ENCODE measurements at regions of chr14 and their contacts with region 1.

Region 1: DNA sequence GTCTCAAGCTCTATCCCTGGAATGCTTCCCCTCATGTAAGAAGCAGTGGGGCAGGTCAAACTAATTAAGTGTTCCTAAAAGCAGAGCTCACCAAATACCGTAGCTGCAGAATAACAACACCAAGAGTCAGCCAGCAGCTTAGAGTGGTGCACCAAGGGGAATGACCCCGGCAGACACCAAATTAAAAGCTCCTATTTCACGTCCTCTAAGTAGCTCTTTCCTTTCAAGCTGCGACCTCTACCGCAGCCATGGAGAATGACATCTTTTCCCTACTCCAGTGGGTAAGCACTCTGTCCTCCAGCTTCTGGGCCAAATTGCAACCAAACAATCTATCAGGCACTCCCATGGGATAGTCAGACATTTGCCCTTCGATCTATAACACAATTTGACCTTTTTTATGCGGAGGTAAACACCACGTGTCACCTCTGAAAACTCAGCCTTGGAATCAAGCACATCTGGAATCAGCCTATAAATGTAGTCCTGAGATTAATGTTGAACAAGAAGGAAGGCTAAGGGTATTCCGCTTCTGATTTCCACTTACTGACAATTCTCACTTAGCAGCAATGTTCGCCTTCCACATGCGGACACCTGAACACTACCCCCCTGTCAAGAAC is 67.6 kb upstream of the CDKN3 start:
- DNase-seq: peak; percentile 65
- ATAC-seq: peak; percentile 94
- H3K4me3 ChIP-seq: no peak overlapping the region
- H3K27ac ChIP-seq: no peak overlapping the region
- H3K4me1 ChIP-seq: peaks cover 19% of the 10 kb centered on the region
- H3K27me3 ChIP-seq: no peaks in the 10 kb centered on the region
- CTCF ChIP-seq: peak; percentile 93
- EP300 ChIP-seq: no peak
- POLR2A ChIP-seq: no peak
- RAD21 ChIP-seq: peak; percentile 86

Region 2: GRCh38 chr14:53663709-53664108 is 665.5 kb before region 1 on chr14:
- CTCF ChIA-PET with region 1: no interaction called
- POLR2A ChIA-PET with region 1: no interaction called
- in situ Hi-C with region 1: no loop called
- intact Hi-C with region 1: loop called (anchors 2 kb)
- DNase-seq: peak; percentile 76
- ATAC-seq: peak; percentile 99
- H3K4me3 ChIP-seq: no peak overlapping the region
- H3K27ac ChIP-seq: no peak overlapping the region
- H3K4me1 ChIP-seq: peaks cover 17% of the 10 kb centered on the region
- H3K27me3 ChIP-seq: no peaks in the 10 kb centered on the region
- CTCF ChIP-seq: peak; percentile 69
- EP300 ChIP-seq: no peak
- POLR2A ChIP-seq: no peak
- RAD21 ChIP-seq: peak; percentile 80

Region 3: GRCh38 chr14:53902307-53902706 is 426.9 kb before region 1 on chr14:
- CTCF ChIA-PET with region 1: no interaction called
- POLR2A ChIA-PET with region 1: no interaction called
- in situ Hi-C with region 1: no loop called
- intact Hi-C with region 1: no loop called
- DNase-seq: no peak
- ATAC-seq: no peak
- H3K4me3 ChIP-seq: no peak overlapping the region
- H3K27ac ChIP-seq: no peak overlapping the region
- H3K4me1 ChIP-seq: peaks cover 22% of the 10 kb centered on the region
- H3K27me3 ChIP-seq: no peaks in the 10 kb centered on the region
- CTCF ChIP-seq: no peak
- EP300 ChIP-seq: no peak
- POLR2A ChIP-seq: no peak
- RAD21 ChIP-seq: no peak

Region 4: DNA sequence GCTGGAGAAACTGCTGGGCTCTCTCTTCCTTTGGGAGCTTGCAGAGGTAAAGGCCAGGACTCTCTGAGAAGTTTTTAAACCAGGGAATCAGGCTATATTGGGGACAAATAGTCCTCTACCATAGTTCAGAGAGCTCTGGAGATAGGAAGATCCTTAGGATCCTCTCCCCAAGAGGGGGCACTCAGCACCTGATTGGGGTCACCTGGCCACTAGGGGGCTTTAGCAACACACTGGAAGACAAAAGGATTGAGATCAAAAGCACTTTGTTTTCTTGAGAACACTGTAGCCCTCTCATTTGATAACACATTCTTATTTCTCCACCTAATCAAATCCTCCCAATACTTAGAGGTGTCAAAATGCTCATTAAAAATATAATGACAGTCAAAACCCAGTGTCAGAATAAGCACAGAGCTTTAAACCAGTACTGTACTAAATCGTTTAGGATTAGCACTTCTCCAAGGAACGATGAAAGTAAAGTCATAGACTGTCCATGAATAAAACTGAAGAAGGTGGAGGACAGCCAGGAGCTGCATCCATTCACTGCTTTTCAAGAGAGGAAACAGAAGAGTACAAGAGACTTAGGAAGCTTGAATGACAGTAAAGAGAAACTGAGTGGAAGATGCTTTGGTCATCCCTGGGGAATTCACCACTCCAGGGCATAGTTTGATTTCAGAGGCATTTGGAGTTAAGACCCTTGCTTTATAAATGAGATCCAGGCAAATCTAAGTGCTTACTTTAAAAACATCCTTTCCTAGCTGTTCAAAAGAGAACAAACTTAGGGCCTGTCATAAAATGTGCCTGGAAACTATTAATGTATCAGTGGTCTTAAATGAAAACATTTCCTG is 399.1 kb before region 1 on chr14:
- CTCF ChIA-PET with region 1: interaction called, 4 read pairs
- POLR2A ChIA-PET with region 1: no interaction called
- in situ Hi-C with region 1: no loop called
- intact Hi-C with region 1: loop called (anchors 2 kb)
- DNase-seq: no peak
- ATAC-seq: peak; percentile 81
- H3K4me3 ChIP-seq: no peak overlapping the region
- H3K27ac ChIP-seq: no peak overlapping the region
- H3K4me1 ChIP-seq: peaks cover 61% of the 10 kb centered on the region
- H3K27me3 ChIP-seq: no peaks in the 10 kb centered on the region
- CTCF ChIP-seq: peak; percentile 80
- EP300 ChIP-seq: no peak
- POLR2A ChIP-seq: no peak
- RAD21 ChIP-seq: peak; percentile 13; the same call in 1 of the 2 replicates

Region 5: GRCh38 chr14:54291491-54292191 is 37.5 kb before region 1 on chr14:
- CTCF ChIA-PET with region 1: no interaction called
- POLR2A ChIA-PET with region 1: no interaction called
- in situ Hi-C with region 1: no loop called
- intact Hi-C with region 1: no loop called
- DNase-seq: peak; percentile 98
- ATAC-seq: peak; percentile 100
- H3K4me3 ChIP-seq: peak overlapping the region in 2 of 3 experiments; percentile 27 to 38; a peak in 2 of 6 replicates
- H3K27ac ChIP-seq: peak overlapping the region; percentile 55
- H3K4me1 ChIP-seq: peaks cover 36% of the 10 kb centered on the region
- H3K27me3 ChIP-seq: no peaks in the 10 kb centered on the region; a peak in 1 of 5 replicates
- CTCF ChIP-seq: no peak
- EP300 ChIP-seq: peak; percentile 56 to 95; a peak in 3 of 4 replicates
- POLR2A ChIP-seq: no peak; a peak in 1 of 4 replicates
- RAD21 ChIP-seq: peak; percentile 26; the same call in 1 of the 2 replicates

Region 6: GRCh38 chr14:54450535-54450934 is 121.3 kb after region 1 on chr14:
- CTCF ChIA-PET with region 1: no interaction called
- POLR2A ChIA-PET with region 1: no interaction called
- in situ Hi-C with region 1: no loop called
- intact Hi-C with region 1: no loop called
- DNase-seq: no peak
- ATAC-seq: no peak
- H3K4me3 ChIP-seq: no peak overlapping the region
- H3K27ac ChIP-seq: peak overlapping the region; percentile 73
- H3K4me1 ChIP-seq: peaks cover 52% of the 10 kb centered on the region
- H3K27me3 ChIP-seq: no peaks in the 10 kb centered on the region
- CTCF ChIP-seq: no peak
- EP300 ChIP-seq: no peak
- POLR2A ChIP-seq: no peak
- RAD21 ChIP-seq: no peak